Activated CD4-positive, alpha-beta T cell treated with anti-CD3 and anti-CD28 coated beads for 36 hours (primary cell): ENCODE measurements at regions of chr10 and their contacts with region 1.

Region 1: GRCh38 chr10:96586419-96587263 is at the start of gene TM9SF3:
- DNase-seq: peak; percentile 97
- ATAC-seq: peak; percentile 64
- H3K4me3 Mint-ChIP-seq: no peak within 1 kb of the TSS
- H3K27ac Mint-ChIP-seq: peak within 1 kb of the TSS; percentile 92
- H3K4me1 Mint-ChIP-seq: peaks cover 33% of the 10 kb centered on the region
- H3K27me3 Mint-ChIP-seq: peaks cover 6% of the 10 kb centered on the region
- total RNA-seq, gene TM9SF3: 45.3 to 70.2 TPM

Region 2: GRCh38 chr10:95693668-95694534 is 892.7 kb before region 1 on chr10 and contains the start of gene TCTN3:
- CTCF ChIA-PET with region 1: no interaction called
- POLR2A ChIA-PET with region 1: no interaction called
- intact Hi-C with region 1: loop called in 1 of 2 experiments (anchors 5 kb)
- DNase-seq: peak; percentile 96
- ATAC-seq: peak; percentile 99
- H3K4me3 Mint-ChIP-seq: peak within 1 kb of the TSS; percentile 98
- H3K27ac Mint-ChIP-seq: peak within 1 kb of the TSS; percentile 92
- H3K4me1 Mint-ChIP-seq: peaks cover 37% of the 10 kb centered on the region
- H3K27me3 Mint-ChIP-seq: peaks cover 4% of the 10 kb centered on the region
- total RNA-seq, gene TCTN3: 19.4 to 20.0 TPM

Region 3: GRCh38 chr10:96513698-96514561 is 72.7 kb before region 1 on chr10 and contains the start of gene TLL2:
- CTCF ChIA-PET with region 1: no interaction called
- POLR2A ChIA-PET with region 1: no interaction called
- intact Hi-C with region 1: loop called (anchors 2 kb)
- DNase-seq: peak; percentile 80
- ATAC-seq: peak; percentile 87
- H3K4me3 Mint-ChIP-seq: peak within 1 kb of the TSS; percentile 57
- H3K27ac Mint-ChIP-seq: no peak within 1 kb of the TSS
- H3K4me1 Mint-ChIP-seq: peaks cover 10% of the 10 kb centered on the region
- H3K27me3 Mint-ChIP-seq: peaks cover 43% of the 10 kb centered on the region
- total RNA-seq, gene TLL2: 0.02 TPM in 1 of 2 experiments, not detected in the other

Region 4: GRCh38 chr10:96910488-96911395 is 324.1 kb after region 1 on chr10:
- CTCF ChIA-PET with region 1: no interaction called
- POLR2A ChIA-PET with region 1: no interaction called
- intact Hi-C with region 1: loop called in 1 of 2 experiments (anchors 5 kb)
- DNase-seq: no peak
- ATAC-seq: no peak
- H3K4me3 Mint-ChIP-seq: no peak overlapping the region
- H3K27ac Mint-ChIP-seq: no peak overlapping the region
- H3K4me1 Mint-ChIP-seq: peaks cover 27% of the 10 kb centered on the region
- H3K27me3 Mint-ChIP-seq: no peaks in the 10 kb centered on the region

Region 5: GRCh38 chr10:97318772-97319651 is 732.4 kb after region 1 on chr10 and contains the start of gene FRAT1:
- CTCF ChIA-PET with region 1: no interaction called
- POLR2A ChIA-PET with region 1: no interaction called
- intact Hi-C with region 1: loop called in 1 of 2 experiments (anchors 2 kb)
- DNase-seq: peak; percentile 92
- ATAC-seq: peak; percentile 64
- H3K4me3 Mint-ChIP-seq: peak within 1 kb of the TSS; percentile 91
- H3K27ac Mint-ChIP-seq: peak within 1 kb of the TSS; percentile 99
- H3K4me1 Mint-ChIP-seq: peaks cover 29% of the 10 kb centered on the region
- H3K27me3 Mint-ChIP-seq: no peaks in the 10 kb centered on the region
- total RNA-seq, gene FRAT1: 1.3 to 1.8 TPM

Region 6: GRCh38 chr10:97355571-97355975 is 768.9 kb after region 1 on chr10:
- CTCF ChIA-PET with region 1: no interaction called
- POLR2A ChIA-PET with region 1: no interaction called
- intact Hi-C with region 1: no loop called
- DNase-seq: no peak
- ATAC-seq: no peak
- H3K4me3 Mint-ChIP-seq: no peak overlapping the region
- H3K27ac Mint-ChIP-seq: no peak overlapping the region
- H3K4me1 Mint-ChIP-seq: no peaks in the 10 kb centered on the region
- H3K27me3 Mint-ChIP-seq: no peaks in the 10 kb centered on the region

Region 7: GRCh38 chr10:97498076-97498840 is 911.6 kb after region 1 on chr10 and contains the start of gene MMS19:
- CTCF ChIA-PET with region 1: no interaction called
- POLR2A ChIA-PET with region 1: no interaction called
- intact Hi-C with region 1: loop called in 1 of 2 experiments (anchors 5 kb)
- DNase-seq: peak; percentile 100
- ATAC-seq: peak; percentile 91
- H3K4me3 Mint-ChIP-seq: peak within 1 kb of the TSS; percentile 87
- H3K27ac Mint-ChIP-seq: peak within 1 kb of the TSS; percentile 97
- H3K4me1 Mint-ChIP-seq: peaks cover 38% of the 10 kb centered on the region
- H3K27me3 Mint-ChIP-seq: peaks cover 20% of the 10 kb centered on the region
- total RNA-seq, gene MMS19: 91.3 to 107 TPM